BJ (cell line): ENCODE measurements at regions of chr3 and their contacts with region 1.

Region 1: GRCh38 chr3:123642182-123642956 is 57.5 kb upstream of the HACD2 start:
- DNase-seq: peak; percentile 59
- H3K4me3 ChIP-seq: no peak overlapping the region
- H3K27me3 ChIP-seq: no peaks in the 10 kb centered on the region
- CTCF ChIP-seq: peak; percentile 89

Region 2: DNA sequence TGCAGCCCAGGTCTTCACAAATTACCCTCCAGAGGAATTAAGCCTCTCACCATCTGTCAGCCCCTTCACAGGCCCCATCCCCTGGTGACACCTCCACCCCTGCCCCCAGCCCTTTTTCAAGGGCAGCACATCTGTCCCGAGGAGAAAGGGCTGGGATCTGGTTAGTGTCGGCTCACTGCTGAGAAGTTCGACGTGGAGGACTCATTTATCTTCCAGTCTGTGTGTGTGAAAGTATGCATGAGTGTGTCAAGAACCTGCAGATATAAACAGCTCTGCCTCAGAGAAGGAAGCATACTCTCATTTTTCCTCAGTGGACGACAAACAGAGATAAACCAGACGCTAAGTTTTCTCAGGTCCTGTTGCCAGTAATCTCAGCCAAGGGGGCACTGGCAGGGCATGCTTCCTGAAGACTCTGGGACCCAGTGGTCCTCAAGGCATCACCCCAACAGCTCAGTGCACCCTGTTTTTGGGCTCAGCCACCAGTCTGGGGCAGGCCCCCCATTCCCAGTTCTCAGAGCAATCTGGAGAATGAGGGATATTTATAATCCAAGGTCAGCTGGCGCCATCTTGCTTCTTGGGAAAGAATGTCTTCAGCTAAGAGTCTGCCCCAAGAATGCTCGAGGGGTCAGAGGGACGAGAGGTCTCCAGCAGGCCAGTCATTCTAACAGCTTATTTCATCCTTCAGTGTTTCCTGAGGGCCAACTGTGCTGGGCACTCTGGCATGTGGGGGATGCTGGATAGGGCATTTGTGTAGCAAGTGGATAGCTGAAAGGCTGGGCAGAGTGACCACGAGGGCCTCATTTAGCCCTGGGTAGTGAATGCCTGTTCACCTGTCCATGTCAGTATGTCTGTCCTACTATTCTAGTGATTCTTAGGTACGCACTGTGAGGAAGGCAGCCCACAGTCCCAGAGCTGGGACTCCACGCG is 267.1 kb before region 1 on chr3:
- CTCF ChIA-PET with region 1: no interaction called
- POLR2A ChIA-PET with region 1: no interaction called
- DNase-seq: no peak
- H3K4me3 ChIP-seq: no peak overlapping the region
- H3K27me3 ChIP-seq: peaks cover 23% of the 10 kb centered on the region
- CTCF ChIP-seq: no peak

Region 3: DNA sequence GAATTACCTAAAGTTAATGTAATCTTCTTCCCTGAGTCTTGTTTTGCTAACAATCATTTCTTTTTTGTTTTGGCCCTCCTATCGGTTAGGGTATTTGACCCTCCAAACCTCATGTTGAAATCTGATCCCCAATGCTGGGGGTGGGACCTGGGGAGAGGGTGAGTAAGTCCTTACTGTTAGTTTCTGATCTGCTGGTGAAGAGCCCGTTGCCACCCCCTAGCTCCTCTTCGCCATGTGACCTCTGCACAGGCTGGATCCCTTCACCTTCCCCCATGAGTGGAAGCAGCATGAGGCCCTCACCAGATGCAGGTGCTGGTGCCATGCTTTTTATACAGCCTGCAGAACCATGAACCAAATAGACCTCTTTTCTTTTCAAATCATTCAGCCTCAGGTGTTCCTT is 130.6 kb before region 1 on chr3:
- CTCF ChIA-PET with region 1: no interaction called
- POLR2A ChIA-PET with region 1: no interaction called
- DNase-seq: no peak
- H3K4me3 ChIP-seq: no peak overlapping the region
- H3K27me3 ChIP-seq: no peaks in the 10 kb centered on the region
- CTCF ChIP-seq: no peak

Region 4: DNA sequence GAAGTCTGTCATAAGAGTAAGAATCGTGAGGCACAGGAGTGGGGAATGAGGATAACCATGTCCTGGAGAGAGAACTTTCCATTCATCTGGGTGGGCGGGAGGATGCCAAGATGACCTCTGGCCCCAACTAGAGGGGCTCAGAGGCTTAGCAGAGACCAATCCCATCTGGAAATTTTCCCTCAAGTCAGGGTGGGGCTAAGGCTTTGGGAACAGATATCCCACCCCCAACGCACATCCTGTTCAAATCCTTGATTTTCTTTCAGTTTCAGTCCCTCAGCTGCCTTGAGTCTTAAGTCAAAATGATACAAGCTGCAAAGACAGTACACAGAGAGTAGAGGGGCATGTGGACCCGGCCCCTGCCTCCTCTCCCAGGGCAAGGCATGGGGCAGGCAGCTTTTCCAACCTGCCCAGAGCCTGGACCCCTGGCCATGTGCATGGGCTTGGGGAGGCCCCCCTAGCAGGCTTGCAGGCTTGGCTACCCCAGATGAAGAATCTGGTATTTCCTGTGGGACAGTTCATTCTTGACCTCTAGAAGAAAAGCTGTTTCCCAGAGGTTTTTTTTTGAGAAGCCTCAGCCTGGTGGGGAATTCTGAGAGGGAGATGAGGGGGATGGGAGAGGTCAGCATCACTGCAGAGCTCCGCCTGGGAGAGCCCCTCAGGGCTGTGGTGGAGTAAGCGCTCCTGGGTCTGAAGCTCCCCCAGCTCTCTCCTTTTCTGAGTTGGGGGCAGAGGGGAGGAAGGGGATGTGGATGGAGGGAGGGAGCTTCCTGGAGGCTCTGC is 52.2 kb after region 1 on chr3:
- CTCF ChIA-PET with region 1: interaction called, 15 read pairs
- POLR2A ChIA-PET with region 1: no interaction called
- DNase-seq: no peak
- H3K4me3 ChIP-seq: no peak overlapping the region
- H3K27me3 ChIP-seq: no peaks in the 10 kb centered on the region
- CTCF ChIP-seq: no peak

Region 5: DNA sequence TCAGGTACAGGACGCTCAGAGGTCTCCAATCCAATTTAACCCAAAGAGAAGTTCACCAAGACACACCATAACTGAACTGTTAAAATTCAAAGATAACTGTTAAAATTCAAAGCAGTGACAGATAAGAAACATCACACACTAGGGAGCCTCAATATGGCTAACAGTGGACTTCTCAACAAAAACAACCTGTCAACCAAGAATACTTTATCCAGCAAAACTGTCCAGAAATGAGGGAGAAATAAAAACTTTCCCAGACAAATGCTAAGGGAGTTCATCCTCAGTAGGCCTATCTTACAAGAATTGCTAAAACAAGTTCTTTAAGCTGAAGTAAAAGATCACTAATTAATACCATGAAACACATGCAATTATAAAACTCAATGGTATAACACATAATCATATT is 278.0 kb after region 1 on chr3:
- CTCF ChIA-PET with region 1: no interaction called
- POLR2A ChIA-PET with region 1: no interaction called
- DNase-seq: no peak
- H3K4me3 ChIP-seq: no peak overlapping the region
- H3K27me3 ChIP-seq: no peaks in the 10 kb centered on the region
- CTCF ChIP-seq: no peak